HepG2 (cell line): ENCODE measurements at regions of chr2 and their contacts with region 1.

Region 1: GRCh38 chr2:898319-898718 is 52.3 kb upstream of the SNTG2 start:
- DNase-seq: peak; percentile 12
- ATAC-seq: peak; percentile 86
- H3K4me3 ChIP-seq: no peak overlapping the region
- H3K27ac ChIP-seq: no peak overlapping the region
- H3K4me1 ChIP-seq: no peaks in the 10 kb centered on the region
- H3K27me3 ChIP-seq: no peaks in the 10 kb centered on the region; a peak in 1 of 5 replicates
- CTCF ChIP-seq: peak; percentile 41
- EP300 ChIP-seq: no peak
- POLR2A ChIP-seq: no peak
- RAD21 ChIP-seq: no peak

Region 2: GRCh38 chr2:854460-854859 is 43.9 kb before region 1 on chr2:
- CTCF ChIA-PET with region 1: no interaction called
- POLR2A ChIA-PET with region 1: no interaction called
- in situ Hi-C with region 1: no loop called
- intact Hi-C with region 1: loop called (anchors 2 kb)
- DNase-seq: peak; percentile 34
- ATAC-seq: peak; percentile 72
- H3K4me3 ChIP-seq: no peak overlapping the region
- H3K27ac ChIP-seq: no peak overlapping the region
- H3K4me1 ChIP-seq: no peaks in the 10 kb centered on the region
- H3K27me3 ChIP-seq: peaks cover 8 to 34% of the 10 kb centered on the region in 2 experiments; a peak in 2 of 5 replicates
- CTCF ChIP-seq: peak; percentile 64
- EP300 ChIP-seq: no peak
- POLR2A ChIP-seq: no peak
- RAD21 ChIP-seq: peak; percentile 35; the same call in 1 of the 2 replicates